ENCODE measurements at regions of chr19 and their contacts with region 1.

Region 1: GRCh38 chr19:47776568-47776967 is 1.9 kb upstream of the SELENOW start:
- DNase-seq: no peak
- H3K4me3 ChIP-seq: no peak overlapping the region
- H3K27ac ChIP-seq: no peak overlapping the region
- H3K4me1 ChIP-seq: peaks cover 9% of the 10 kb centered on the region
- H3K27me3 ChIP-seq: no peaks in the 10 kb centered on the region
- CTCF ChIP-seq: no peak

Region 2: DNA sequence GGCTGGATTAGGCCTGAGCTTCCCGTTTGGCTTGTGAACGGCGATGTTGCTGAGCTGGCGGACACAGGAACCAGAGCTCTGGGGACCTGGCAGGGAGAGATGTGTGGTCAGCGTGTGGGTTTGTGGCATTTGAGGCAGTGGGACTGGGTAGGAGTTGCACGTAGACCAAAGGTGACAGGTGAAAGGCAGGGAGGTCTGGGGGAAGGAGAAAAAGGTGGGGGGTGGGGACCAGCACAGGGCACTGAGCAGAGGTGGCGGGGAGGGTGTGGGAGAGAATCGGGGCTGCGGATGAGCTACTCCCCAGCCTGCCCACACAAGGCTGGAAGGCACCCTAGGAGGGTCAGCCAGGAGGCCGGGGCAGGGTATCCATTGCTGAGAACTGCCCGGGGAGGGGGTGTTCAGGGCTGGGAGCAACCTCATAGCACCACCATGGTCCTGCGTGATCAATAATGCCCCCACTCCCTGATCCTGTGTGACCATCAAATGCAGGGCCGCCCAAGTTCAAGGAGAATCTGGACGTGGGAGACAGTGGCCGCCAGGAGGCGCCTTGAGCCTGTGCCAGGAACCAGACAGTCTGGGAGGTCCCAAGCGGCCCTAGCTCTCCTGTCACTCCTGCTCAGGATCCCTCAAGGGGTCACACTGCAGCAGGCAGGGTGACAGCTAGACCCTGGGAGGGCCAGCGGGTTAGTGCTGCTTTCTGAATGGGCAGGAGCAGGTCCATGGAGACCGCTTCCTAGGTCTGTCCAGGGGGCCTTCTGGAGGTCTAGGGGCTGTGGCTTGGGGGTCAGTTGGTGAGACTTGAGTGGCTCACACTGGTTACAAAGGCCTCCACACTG is 10.8 kb before region 1 on chr19:
- CTCF ChIA-PET with region 1: interaction called, 10 read pairs
- POLR2A ChIA-PET with region 1: interaction called, 4 read pairs
- intact Hi-C with region 1: no loop called
- DNase-seq: peak; percentile 71
- H3K4me3 ChIP-seq: no peak overlapping the region
- H3K27ac ChIP-seq: no peak overlapping the region
- H3K4me1 ChIP-seq: no peaks in the 10 kb centered on the region
- H3K27me3 ChIP-seq: no peaks in the 10 kb centered on the region
- CTCF ChIP-seq: peak; percentile 88

Region 3: DNA sequence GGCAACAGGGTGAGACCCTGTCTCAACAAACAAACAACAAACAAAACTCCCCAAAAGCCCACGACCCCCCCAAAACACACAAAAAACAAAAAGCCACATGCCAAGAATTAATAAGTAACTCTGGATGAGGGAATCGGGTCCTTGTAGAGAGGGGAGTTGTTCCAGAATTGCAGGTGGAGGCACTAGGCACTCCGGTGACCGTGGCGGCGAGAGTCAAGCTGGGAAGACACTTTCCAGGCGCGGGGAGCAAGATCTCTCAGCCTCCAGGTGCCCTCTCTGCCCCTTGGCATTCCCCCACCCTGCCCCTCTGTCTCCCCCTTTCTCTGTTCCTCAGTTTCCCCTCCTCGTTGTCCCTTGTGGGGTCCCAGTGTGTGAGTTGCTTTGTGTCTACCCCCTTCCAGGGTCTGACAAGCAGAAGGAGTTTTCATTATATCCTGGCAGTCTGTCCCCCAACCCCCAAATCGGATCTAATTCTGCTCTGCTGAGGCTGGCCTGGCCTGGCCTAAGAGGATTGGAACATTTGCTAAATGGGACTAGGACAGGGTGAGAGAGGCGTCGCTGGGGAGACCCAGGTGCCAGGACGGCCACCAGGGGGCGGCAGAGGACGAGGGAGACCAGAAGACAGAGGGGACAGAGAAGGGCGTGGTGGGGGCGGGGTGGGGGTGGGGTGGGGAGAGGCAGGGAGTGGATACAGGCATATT is 36.9 kb after region 1 on chr19:
- CTCF ChIA-PET with region 1: no interaction called
- POLR2A ChIA-PET with region 1: no interaction called
- intact Hi-C with region 1: no loop called
- DNase-seq: peak; percentile 82
- H3K4me3 ChIP-seq: no peak overlapping the region
- H3K27ac ChIP-seq: no peak overlapping the region
- H3K4me1 ChIP-seq: no peaks in the 10 kb centered on the region
- H3K27me3 ChIP-seq: no peaks in the 10 kb centered on the region
- CTCF ChIP-seq: peak; percentile 70

Measured in A673 (cell line).